Posterior cingulate gyrus (tissue), 11 donors: ENCODE measurements at regions of chr3 and their contacts with region 1.

Region 1: DNA sequence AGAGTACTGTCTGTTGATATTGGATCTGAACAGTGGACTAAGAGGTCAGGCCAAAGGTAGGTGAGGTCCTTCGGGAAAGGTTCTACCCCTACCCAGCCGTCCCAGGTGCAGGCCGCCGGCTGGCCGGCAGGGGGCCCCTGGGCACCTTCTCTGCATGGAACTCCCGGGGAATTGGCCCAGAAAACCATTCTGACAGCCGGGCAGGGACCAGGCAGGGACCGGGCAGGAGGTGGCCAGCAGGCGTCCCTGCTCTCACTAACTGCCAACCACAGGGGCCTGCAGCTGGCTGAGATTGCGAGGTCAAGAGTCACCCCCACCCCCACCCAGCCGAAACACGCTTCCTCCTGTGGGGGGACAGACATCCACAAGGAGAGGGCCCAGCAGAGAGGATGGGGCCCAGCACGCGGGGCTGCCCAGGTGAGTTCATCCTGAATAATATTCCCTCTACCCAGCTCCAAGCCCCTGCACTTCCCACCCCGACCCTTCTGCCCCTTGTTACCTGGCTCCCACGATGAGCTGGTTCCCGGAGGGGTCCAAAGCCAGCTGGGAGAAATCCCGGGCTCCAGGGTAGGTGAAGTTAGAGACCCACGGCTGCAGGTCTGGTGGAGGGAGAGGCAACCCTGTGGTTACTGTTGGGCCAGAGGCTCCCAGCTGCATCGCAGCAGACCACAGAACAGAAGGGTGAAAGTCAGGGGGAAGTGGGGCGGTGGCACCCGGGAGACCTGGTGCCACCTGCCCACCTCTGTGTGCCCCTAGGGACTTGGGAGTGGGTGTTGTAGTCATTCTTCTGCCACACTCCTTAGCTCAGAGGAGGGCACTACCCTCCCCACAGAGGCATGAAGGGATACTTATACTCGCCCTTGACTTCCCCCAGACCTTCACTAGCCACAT is 84.4 kb downstream of the SEMA5B start:
- DNase-seq: peak; percentile 40 to 96 (median 74)

Region 2: GRCh38 chr3:123258811-123259420 is 315.7 kb after region 1 on chr3:
- intact Hi-C with region 1: loop called (anchors 1 kb)
- DNase-seq: no peak